ENCODE measurements at regions of chr6 and their contacts with region 1.

Region 1: DNA sequence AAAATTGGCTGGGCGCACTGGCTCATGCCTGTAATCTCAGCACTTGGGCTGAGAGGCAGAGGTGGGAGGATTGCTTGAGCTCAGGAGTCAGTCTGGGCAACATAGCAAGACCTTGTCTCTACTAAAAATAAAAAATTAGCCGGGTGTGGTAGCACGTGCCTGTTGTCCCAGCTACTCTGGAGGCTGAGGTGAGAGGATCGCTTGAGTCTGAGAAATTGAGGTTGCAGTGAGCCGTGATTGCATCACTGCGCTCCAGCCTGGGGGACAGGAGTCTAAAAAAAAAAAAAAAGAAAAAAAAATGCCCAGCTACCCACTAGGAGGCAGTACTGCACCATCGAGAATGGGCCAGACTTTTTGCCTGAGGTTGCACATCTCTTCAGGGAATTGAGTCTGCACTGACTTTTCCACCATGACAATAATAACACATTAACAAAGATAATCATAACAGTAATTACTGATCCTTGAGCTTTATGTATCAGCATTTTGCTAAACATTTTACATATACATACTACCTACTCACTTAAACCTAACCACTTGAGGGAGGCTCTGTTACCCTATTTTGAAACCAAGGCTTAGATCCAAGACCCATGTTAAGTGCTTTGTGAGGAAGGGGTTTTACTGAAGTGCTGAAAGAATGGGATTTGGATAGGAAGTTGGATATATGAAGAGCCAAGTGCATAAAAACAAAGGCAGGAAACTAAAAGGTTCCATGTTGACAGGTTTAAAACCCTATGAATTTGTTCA is 21.0 kb downstream of the SRSF3 start:
- DNase-seq: peak; percentile 88

Region 2: DNA sequence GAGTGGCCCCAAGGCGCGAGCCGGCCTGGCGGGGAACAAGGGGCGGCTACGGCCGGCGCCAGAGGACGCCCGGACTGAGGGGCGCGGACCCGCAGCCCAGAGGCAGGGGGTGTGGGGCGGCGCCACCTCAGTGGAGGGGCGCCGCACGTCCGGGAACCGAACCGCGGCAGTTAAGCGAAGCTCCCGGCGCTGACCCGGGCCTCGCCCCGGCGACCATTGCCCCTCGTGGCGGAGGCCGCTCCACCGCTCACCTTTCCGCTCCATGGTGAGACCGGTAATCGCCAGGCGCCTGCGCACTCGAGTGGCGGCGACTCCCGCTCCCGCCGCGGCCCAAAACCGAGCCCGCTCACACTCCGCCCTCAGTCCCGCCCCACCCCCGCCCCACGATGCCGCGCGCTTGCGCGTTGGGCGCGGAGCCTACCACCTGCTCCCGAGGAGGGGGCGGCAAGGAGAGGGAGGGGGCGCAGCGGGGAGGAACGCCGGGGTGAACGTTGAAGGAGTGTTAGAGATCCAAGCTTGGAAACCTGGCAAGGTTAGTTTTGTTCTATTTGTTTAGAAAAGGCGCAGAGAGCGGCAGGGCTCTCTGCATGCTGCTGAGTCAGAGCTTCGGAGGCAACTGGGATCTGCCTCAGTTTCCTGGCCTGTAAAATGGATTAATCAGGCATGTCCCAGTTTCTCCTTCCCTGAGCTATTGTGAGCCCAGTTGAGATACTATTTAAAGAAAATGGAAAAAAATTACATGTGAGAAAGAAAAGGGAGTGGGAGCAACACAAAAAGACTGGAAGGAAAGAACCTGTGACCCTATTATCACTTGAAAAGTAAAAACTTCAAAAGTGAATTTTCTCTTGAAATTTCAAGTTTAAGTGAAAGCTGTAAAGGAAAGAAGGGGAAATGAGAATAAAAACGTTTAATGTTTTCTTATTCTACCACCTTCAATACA is 694.1 kb before region 1 on chr6 and contains the start of gene SRPK1:
- intact Hi-C with region 1: no loop called
- DNase-seq: peak; percentile 96
- total RNA-seq, gene SRPK1: 29.0 to 30.7 TPM

Region 3: DNA sequence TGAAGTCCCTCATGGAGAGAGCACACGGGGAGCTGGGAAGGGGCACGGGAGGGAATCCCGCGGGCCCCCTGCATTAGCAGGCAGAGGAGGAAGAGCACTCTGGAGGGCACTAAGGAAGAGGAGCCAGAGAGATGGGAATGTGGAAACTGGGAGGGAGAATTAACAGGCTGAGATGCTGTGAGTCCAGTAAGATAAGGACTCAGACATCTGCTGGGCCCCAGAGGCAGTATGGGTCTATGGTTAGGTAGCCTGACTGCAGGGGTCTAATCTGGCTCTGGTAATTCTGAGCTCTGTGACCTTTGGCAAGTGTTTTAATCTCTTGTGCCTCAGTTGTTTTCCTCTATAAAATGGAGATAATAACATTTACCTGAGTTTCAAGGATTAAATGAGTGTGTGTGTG is 36.8 kb before region 1 on chr6:
- intact Hi-C with region 1: loop called in 1 of 2 experiments (anchors 1 kb)
- DNase-seq: no peak

Region 4: DNA sequence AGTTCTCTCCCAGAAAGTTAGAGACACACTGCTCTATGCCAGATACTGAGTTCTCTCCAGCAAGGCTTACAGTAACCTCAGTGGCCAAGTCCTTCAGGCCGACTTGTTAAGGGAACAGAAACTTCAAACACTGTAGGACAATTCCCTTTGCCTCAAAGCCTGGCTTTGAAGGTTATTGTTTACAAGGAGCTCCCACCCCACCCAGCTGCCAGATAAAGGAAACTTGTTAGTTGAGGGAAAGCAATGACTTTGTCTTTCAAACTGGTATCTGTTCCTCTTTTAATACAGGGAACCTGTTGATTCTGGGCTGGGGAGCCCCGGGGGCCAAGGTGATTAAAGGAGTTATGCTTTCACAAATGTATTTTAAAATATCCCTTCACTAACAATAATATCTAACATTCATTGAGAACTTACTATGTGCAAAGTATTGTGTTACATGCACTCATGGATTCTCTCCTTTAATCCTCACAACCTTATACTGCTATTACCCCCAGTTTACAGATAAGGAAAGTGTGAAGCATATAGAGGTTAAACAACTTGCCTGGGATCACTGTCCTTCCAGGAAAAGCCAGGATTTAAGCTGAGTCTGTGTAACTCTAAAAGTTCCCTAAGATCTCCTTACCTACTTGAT is 35.8 kb after region 1 on chr6:
- intact Hi-C with region 1: no loop called
- DNase-seq: no peak

Region 5: DNA sequence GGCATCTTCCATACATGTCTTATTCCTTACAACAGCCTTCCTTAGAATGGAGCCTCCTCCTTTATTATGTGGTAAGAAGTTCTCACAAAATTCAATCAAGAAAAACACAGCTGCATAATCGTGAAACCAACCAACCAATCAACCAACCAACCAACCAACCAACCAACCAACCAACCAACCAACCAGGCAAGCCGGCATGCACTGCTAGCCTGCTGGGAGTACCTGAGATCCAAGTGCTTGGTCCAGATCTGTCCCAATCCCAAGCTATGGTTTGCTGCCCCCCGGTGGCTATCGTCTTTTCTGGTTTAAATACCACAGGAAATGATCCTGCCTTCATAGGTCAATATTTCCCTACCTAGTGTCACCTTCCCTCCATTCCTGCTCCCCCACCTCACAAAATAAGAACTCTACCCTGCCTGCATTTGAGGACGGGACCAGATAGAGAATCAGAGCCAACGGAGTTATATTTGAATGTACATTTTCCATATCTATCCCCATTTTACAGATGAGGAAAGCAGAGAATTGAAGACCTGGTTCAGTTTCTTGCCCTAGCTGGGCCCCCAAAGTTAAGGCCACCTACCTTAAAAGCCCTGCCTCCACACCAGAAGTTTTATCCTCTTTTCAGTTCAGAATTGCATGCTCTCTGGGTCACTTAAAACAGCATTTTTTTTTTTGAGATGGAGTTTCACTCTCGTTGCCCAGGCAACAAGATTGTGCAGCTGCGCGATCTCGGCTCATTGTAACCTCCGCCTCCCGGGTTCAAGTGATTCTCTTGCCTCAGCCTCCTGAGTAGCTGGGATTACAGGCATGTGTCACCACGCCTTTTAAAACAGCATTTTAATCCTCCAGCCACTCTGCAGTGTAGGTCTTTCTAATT is 109.6 kb after region 1 on chr6:
- intact Hi-C with region 1: loop called in 1 of 2 experiments (anchors 2 kb)
- DNase-seq: peak; percentile 85

Region 6: DNA sequence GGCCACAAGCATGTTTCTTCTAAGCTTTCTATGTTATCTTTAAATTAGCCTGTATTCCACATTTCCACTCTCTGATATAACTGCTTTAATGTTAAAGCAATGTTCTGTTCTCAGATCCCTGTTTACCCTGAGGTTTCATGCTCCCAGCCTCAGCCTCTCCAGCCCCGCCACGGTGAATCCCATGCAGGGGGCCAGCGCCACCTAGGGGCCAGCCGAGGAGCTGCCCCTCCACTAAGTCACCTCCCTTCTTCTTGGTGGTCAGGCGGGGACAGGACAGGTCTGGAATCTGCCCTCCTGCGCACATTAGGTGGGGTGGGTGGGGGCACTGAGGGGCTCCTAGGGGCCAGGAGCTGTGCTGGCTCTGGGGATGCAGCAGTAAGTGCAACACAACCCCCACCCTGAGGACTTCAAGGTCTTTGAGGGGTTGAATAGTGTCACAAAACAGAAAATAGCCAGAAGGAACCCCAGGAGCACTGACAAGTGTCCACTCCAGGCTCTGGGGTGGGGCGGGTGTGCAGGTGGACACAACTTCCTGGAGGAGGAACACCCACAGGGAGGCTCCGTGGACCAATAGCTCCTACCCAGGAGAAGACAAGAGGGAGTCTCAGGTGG is 144.1 kb after region 1 on chr6:
- intact Hi-C with region 1: loop called in 1 of 2 experiments (anchors 10 kb)
- DNase-seq: peak; percentile 95